ENCODE measurements at regions of chr13 and their contacts with region 1.

Region 1: GRCh38 chr13:39037880-39038568 is at the starts of genes NHLRC3 and PROSER1:
- DNase-seq: peak; percentile 54
- ATAC-seq: peak; percentile 96
- H3K4me3 ChIP-seq: peak within 1 kb of the TSS; percentile 89 to 91
- H3K27ac ChIP-seq: peak within 1 kb of the TSS; percentile 93
- H3K4me1 ChIP-seq: peaks cover 8% of the 10 kb centered on the region
- H3K27me3 ChIP-seq: no peaks in the 10 kb centered on the region
- CTCF ChIP-seq: no peak
- total RNA-seq, gene NHLRC3: 16.1 TPM
- total RNA-seq, gene PROSER1: 24.7 TPM

Region 2: DNA sequence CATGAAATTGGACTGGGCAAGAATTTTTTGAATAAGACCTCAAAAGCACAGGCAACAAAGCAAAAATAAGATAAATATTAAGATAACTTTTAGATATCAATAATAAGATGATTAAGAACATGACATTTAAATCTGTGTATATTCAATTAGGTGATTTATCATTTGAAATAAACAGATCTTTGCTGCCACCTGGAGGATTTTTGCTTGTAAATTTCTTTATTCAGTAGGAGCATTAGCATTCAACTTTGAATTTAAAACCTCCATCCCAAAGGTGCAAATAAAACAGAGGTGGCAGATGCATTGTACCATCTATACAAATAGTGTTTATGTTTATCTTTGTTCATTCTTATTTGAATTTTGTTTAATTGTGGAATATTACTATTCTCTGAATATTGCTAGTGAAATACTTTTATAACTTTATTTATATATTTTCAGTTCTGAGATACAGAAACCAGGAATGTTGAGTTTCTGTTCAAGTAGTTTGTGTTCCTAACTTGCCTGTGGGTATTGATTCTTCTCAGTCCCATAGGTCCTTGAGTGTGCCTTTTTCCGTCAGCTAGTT is 638.4 kb after region 1 on chr13:
- CTCF ChIA-PET with region 1: no interaction called
- POLR2A ChIA-PET with region 1: no interaction called
- in situ Hi-C with region 1: no loop called
- intact Hi-C with region 1: loop called (anchors 10 kb)
- DNase-seq: no peak
- ATAC-seq: no peak
- H3K4me3 ChIP-seq: no peak overlapping the region
- H3K27ac ChIP-seq: no peak overlapping the region
- H3K4me1 ChIP-seq: no peaks in the 10 kb centered on the region
- H3K27me3 ChIP-seq: no peaks in the 10 kb centered on the region
- CTCF ChIP-seq: peak; percentile 46; the same call in 1 of the 2 replicates

Region 3: GRCh38 chr13:39952249-39953233 is 914.5 kb after region 1 on chr13:
- CTCF ChIA-PET with region 1: no interaction called
- POLR2A ChIA-PET with region 1: no interaction called
- in situ Hi-C with region 1: no loop called
- intact Hi-C with region 1: no loop called
- DNase-seq: no peak
- ATAC-seq: no peak
- H3K4me3 ChIP-seq: no peak overlapping the region
- H3K27ac ChIP-seq: no peak overlapping the region
- H3K4me1 ChIP-seq: no peaks in the 10 kb centered on the region
- H3K27me3 ChIP-seq: no peaks in the 10 kb centered on the region
- CTCF ChIP-seq: no peak